ENCODE measurements at regions of chr15 and their contacts with region 1.

Region 1: GRCh38 chr15:65298731-65299130 is 2.9 kb downstream of the RNU5A-1 start:
- DNase-seq: no peak
- H3K4me3 Mint-ChIP-seq: peak overlapping the region; percentile 84
- H3K27ac Mint-ChIP-seq: peak overlapping the region; percentile 98
- H3K4me1 Mint-ChIP-seq: peaks cover 54% of the 10 kb centered on the region
- H3K27me3 Mint-ChIP-seq: no peaks in the 10 kb centered on the region

Region 2: DNA sequence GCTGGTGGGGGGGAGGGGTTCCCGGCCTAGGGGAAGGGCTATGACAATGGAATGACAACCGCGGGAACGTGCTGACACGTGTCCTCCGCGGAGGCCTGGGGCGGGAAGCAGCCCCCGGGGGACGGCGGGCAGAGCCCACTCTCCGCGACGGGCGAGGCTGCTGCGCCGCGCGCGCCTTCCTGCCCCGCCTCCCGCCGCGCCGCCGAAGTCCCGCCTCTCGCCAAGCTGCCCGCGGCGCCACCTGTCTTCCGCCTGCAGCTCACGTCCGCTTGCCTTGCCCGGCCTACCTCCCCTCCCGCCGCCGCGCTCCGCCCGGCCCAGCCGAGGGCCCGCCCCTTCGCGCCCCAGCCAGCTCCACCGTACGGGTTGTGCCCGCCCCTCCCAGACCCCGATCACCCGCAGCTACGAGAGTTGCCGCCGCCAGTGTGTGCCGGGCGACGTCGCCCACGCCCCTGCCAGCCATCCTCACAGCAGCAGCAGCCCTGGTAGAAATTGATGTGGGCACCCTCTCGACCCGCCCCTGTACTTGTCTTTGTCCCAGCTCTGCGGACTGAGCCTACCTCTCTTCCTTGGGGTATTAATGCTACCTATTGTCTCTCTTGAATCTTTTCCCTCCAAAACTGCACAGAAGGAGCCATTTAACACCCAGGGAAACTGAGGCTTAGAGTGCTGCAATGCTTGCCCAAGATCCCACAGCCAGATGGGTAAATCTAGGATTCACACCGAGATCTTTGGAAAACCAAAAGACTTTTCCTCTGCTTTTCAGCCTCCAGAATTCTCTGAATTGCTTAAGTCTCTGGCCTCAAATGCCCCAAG is 11.8 kb before region 1 on chr15 and contains the start of gene PARP16:
- CTCF ChIA-PET with region 1: interaction called, 17 read pairs
- POLR2A ChIA-PET with region 1: interaction called, 6 read pairs
- DNase-seq: peak; percentile 91
- H3K4me3 Mint-ChIP-seq: peak within 1 kb of the TSS; percentile 80
- H3K27ac Mint-ChIP-seq: peak within 1 kb of the TSS; percentile 90
- H3K4me1 Mint-ChIP-seq: peaks cover 39% of the 10 kb centered on the region
- H3K27me3 Mint-ChIP-seq: no peaks in the 10 kb centered on the region
- total RNA-seq, gene PARP16: 19.0 to 21.7 TPM

Region 3: DNA sequence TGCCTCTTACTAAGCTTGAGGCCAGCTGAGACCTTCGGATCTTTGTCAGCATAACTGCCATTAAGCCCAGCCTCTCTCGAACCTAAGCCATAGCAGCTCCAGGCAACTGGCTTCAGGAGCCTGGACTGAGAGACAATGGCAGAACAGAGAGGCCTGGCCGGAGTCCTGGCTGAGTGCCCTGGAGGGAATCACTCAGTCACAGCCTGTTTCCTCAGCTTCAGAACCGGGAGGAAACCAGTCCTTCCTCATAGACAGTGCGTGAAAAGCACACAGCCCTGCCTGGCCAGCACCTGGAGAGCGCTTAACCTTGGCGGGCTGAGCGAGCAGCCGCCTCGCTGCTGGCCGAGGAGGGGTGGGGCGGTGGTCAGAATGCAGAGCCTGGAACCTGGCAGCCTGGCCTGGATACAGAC is 27.4 kb after region 1 on chr15:
- CTCF ChIA-PET with region 1: no interaction called
- POLR2A ChIA-PET with region 1: no interaction called
- DNase-seq: no peak
- H3K4me3 Mint-ChIP-seq: no peak overlapping the region
- H3K27ac Mint-ChIP-seq: no peak overlapping the region
- H3K4me1 Mint-ChIP-seq: no peaks in the 10 kb centered on the region
- H3K27me3 Mint-ChIP-seq: peaks cover 10% of the 10 kb centered on the region

Measured in activated CD4-positive, alpha-beta T cell treated with anti-CD3 and anti-CD28 coated beads, Interleukin-2, amount 10 ng/mL, durations not matched to agents 7 days and 5 days (primary cell).